ENCODE measurements at regions of chr3 and their contacts with region 1.

Region 1: GRCh38 chr3:139111392-139112229 is 66.9 kb upstream of the PRR23C start:
- DNase-seq: peak; percentile 57
- ATAC-seq: peak; percentile 89
- H3K4me3 ChIP-seq: peak overlapping the region in 1 of 2 experiments; percentile 21; a peak in 1 of 4 replicates
- H3K27ac ChIP-seq: peak overlapping the region; percentile 2; the same call in 1 of the 2 replicates
- H3K4me1 ChIP-seq: peaks cover 10 to 31% of the 10 kb centered on the region in 2 experiments; a peak in 3 of 4 replicates
- H3K27me3 ChIP-seq: no peaks in the 10 kb centered on the region
- CTCF ChIP-seq: peak; percentile 82 to 91 (median 89)
- POLR2A ChIP-seq: no peak
- RAD21 ChIP-seq: peak; percentile 91

Region 2: DNA sequence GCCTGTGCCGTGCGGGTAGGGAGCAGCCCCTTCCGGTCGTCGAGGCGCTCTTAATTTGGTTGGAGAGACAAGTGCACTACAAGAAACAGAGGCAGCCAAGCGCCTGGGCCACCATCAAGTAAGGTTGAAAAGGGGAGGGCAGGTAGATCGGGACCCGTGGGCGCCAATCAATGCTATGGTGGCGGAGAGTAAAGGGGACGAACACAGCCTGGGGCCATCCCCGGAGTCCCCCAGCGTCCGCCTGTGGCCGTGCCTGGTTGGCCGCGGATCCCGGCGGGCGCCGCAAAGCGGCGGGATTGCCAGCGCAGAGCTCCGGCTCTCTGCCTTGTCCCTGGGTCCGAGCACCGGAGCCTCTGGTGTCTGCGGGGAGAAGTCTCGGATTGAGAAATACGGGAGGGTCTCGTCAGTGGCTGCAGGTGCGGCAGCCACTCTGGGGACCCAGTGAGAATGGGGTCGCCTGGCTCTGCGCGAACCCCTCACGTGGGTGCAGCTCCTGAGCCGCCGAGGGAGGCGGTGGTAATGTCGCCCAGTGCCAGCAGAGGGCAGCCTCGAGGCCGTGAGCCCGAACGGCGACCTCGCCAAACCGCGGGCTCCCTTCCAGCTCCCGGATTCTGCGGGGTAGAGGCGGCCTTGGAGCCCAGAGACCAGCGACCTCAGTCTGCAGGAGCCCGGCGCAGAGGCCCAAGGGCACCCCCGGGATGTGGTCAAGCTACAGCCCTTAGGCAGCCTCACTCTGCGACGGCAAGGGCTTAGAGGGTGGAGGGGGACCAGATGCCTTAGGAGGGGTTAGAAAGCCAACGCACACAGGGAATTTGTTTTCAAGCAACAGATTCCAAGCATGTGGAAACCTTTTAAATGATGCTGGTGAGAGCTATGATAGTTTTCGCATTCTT is 175.5 kb before region 1 on chr3:
- CTCF ChIA-PET with region 1: interaction called, 17 read pairs
- POLR2A ChIA-PET with region 1: no interaction called
- RAD21 ChIA-PET with region 1: interaction called in 1 of 2 experiments, 4 read pairs
- intact Hi-C with region 1: loop called (anchors 2 kb)
- DNase-seq: peak; percentile 52
- ATAC-seq: peak; percentile 88
- H3K4me3 ChIP-seq: peak overlapping the region; percentile 43 to 68
- H3K27ac ChIP-seq: peak overlapping the region; percentile 21
- H3K4me1 ChIP-seq: peaks cover 6 to 18% of the 10 kb centered on the region in 2 experiments; a peak in 3 of 4 replicates
- H3K27me3 ChIP-seq: no peaks in the 10 kb centered on the region
- CTCF ChIP-seq: peak; percentile 70 to 91 (median 76)
- POLR2A ChIP-seq: no peak
- RAD21 ChIP-seq: peak; percentile 61

Region 3: DNA sequence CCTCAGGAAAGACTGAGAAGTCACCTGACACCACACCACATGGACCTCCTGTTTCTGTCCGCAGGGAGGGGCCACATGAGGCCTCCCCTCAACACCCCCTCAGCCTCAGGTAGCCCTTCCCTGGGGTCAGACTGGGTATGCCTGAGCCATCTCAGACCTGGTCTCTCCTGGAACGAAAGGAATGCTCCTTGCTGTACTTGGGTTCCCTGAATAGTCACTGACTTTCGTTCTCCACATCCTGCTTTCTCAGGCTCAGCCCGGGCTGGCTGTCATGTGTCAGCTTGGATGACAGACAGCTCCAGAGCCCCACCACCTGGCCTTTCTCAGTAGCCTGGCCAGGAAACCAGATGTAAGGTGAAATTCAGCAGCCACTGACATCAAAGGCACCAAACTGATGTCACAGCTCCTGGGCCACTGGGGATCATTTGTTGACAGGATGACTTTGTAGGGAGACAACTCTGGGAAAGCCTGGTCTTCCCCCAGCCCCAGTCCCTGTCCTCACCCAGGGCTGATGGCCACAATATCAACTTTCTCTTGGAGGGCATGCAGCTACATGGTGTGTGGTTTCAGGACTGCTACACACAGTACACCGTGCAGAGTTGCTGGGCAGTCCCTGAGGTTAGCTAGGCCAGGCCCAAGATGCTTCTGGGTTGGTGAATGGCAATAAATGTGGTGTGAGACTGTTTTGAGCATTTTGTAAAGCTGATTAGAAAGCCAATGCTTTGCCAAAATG is 90.8 kb after region 1 on chr3:
- CTCF ChIA-PET with region 1: interaction called, 16 read pairs
- POLR2A ChIA-PET with region 1: interaction called, 4 read pairs
- RAD21 ChIA-PET with region 1: interaction called, 4 to 5 read pairs
- intact Hi-C with region 1: loop called (anchors 2 kb)
- DNase-seq: peak; percentile 54
- ATAC-seq: peak; percentile 92
- H3K4me3 ChIP-seq: peak overlapping the region in 1 of 2 experiments; percentile 24; a peak in 1 of 4 replicates
- H3K27ac ChIP-seq: peak overlapping the region; percentile 26; the same call in 1 of the 2 replicates
- H3K4me1 ChIP-seq: peaks cover 13 to 19% of the 10 kb centered on the region in 2 experiments
- H3K27me3 ChIP-seq: no peaks in the 10 kb centered on the region
- CTCF ChIP-seq: peak; percentile 22 to 45 (median 38); a peak in 3 of 6 replicates
- POLR2A ChIP-seq: no peak
- RAD21 ChIP-seq: peak; percentile 81

Region 4: DNA sequence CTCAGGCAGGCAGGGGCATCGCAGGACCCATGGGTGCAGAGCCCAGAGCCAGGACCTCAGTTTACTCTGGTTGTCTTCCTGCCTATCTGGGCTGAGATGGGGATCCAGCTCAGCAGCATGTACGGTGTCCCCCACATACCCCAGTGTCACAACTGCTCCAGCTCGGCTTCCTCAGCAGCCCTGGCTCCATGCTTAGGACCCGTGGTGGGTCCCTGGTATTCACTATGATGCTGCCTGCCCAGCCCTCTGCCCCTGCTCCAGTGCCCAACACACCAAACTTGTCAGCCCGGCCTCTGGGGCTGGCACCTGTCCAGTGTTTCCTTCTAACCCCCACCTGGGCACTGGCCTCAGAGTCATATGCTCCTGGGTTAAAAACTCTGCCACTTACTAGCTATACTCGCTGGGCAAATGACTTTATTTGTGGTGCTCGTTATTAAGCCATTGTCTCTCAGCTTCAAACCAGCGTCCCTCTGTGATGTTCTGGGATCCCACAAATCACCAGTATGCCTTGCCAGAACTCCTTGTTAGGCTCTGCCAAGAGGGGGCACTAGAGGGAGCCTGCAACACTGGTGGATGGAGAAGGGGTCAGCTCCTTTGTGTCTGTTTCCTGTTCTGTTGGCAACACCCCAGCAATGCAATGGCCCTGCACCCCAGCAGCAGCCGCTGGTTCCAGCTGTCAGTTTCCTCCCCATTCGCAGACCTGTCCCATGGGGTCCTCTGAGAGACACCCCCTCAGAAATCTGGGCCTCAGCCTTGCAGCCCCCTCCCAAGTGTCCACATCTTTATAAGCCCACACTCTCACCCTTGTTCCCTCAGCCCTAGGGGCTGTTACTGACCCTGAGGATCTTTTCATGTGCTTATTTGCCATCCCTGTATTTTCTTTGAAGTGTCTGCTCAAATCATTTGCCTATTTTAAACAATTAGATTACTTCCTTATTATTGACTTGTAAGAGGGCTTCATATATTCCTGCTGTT is 208.1 kb after region 1 on chr3:
- CTCF ChIA-PET with region 1: interaction called, 66 read pairs
- POLR2A ChIA-PET with region 1: interaction called, 7 read pairs
- RAD21 ChIA-PET with region 1: interaction called in 1 of 2 experiments, 7 read pairs
- intact Hi-C with region 1: no loop called
- DNase-seq: no peak
- ATAC-seq: peak; percentile 65
- H3K4me3 ChIP-seq: no peak overlapping the region
- H3K27ac ChIP-seq: peak overlapping the region; percentile 94
- H3K4me1 ChIP-seq: peaks cover 52 to 72% of the 10 kb centered on the region in 2 experiments
- H3K27me3 ChIP-seq: no peaks in the 10 kb centered on the region
- CTCF ChIP-seq: peak in 2 of 3 experiments; percentile 82 to 90; a peak in 4 of 6 replicates
- POLR2A ChIP-seq: no peak
- RAD21 ChIP-seq: no peak

Region 5: DNA sequence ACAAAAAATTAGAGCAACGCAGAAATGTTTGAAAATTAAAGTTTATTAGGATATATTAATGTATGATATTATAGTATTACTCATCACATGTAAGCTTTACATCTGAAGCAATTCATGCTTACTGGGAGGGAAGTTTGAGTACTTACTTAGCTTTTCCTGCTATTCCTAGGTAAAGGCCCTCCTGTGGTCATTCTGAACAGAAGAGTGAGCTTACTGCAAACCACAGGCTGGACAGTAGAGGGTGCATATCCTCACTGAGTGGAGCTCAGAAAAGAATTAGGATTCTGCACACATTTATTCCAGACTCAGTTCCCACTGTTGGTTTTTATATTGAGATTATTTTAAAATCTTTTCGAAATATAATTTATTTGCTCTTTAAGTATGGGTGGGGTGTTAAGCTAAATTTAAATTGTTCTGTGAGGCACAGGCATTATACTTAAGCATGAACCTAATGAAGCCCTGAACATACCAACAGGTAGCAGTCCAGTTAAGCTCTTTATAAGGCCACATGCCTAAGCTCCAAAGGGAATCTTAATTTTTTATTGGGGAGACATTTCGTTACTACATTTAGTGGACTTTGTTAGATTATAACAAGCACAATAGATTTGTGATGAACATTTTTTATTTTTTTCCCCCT is 242.4 kb after region 1 on chr3:
- CTCF ChIA-PET with region 1: interaction called, 18 read pairs
- POLR2A ChIA-PET with region 1: no interaction called
- RAD21 ChIA-PET with region 1: interaction called, 4 to 6 read pairs
- intact Hi-C with region 1: no loop called
- DNase-seq: peak; percentile 60
- ATAC-seq: peak; percentile 95
- H3K4me3 ChIP-seq: no peak overlapping the region
- H3K27ac ChIP-seq: no peak overlapping the region
- H3K4me1 ChIP-seq: no peaks in the 10 kb centered on the region
- H3K27me3 ChIP-seq: no peaks in the 10 kb centered on the region
- CTCF ChIP-seq: peak; percentile 85 to 98 (median 96)
- POLR2A ChIP-seq: no peak
- RAD21 ChIP-seq: peak; percentile 65

Region 6: DNA sequence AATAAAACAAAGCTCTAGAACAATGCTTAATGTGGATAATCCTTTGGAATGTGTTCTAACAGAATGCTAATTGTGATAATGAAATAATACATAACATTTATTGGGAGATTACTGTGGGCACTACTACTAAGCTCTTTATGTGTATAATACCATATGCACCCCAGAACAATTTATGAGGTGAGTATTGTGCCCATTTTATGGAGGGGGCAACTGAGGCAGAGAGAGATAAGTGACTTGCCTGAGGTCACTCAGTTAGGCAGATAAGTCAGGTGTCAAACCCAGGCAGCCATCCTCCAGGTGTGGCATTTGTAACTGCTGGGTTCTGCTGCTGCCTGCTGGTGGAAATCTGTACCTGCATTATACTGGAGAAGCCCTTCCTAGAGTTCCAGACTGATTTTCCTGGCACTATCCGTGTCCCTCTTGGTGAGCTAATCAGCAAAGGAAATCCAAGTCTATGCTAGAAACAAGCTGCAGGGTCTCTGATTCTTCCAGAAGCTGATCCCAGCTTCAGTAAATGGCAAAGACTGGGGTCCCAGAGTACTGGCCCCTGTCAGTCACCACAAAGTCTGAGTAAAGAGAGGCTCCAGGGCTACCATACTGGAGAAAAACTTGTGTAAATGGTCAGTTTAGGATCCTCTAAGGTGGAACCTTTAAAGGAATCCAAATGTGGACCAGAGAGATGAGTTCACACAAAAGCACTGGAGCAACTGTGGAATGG is 450.5 kb after region 1 on chr3:
- CTCF ChIA-PET with region 1: no interaction called
- POLR2A ChIA-PET with region 1: no interaction called
- RAD21 ChIA-PET with region 1: no interaction called
- intact Hi-C with region 1: loop called (anchors 5 kb)
- DNase-seq: peak; percentile 56
- ATAC-seq: peak; percentile 95
- H3K4me3 ChIP-seq: no peak overlapping the region
- H3K27ac ChIP-seq: no peak overlapping the region
- H3K4me1 ChIP-seq: no peaks in the 10 kb centered on the region
- H3K27me3 ChIP-seq: no peaks in the 10 kb centered on the region
- CTCF ChIP-seq: peak; percentile 73 to 90 (median 86)
- POLR2A ChIP-seq: no peak
- RAD21 ChIP-seq: peak; percentile 97